ENCODE measurements at regions of chrX and their contacts with region 1.

Region 1: GRCh38 chrX:103817502-103817901 is 14.6 kb downstream of the RAB9B start:
- DNase-seq: peak; percentile 30 to 64 (median 38)
- ATAC-seq: peak; percentile 78
- H3K4me3 ChIP-seq: no peak overlapping the region
- H3K27ac ChIP-seq: no peak overlapping the region
- H3K4me1 ChIP-seq: no peaks in the 10 kb centered on the region
- H3K27me3 ChIP-seq: no peaks in the 10 kb centered on the region
- CTCF ChIP-seq: peak in 2 of 3 experiments; percentile 49 to 72; a peak in 3 of 6 replicates
- EP300 ChIP-seq: no peak
- POLR2A ChIP-seq: no peak
- RAD21 ChIP-seq: peak; percentile 60 to 66

Region 2: GRCh38 chrX:103520386-103520785 is 297.1 kb before region 1 on chrX:
- CTCF ChIA-PET with region 1: no interaction called
- POLR2A ChIA-PET with region 1: no interaction called
- in situ Hi-C with region 1: loop called (anchors 10 kb)
- intact Hi-C with region 1: no loop called
- DNase-seq: no peak
- ATAC-seq: no peak
- H3K4me3 ChIP-seq: no peak overlapping the region
- H3K27ac ChIP-seq: no peak overlapping the region
- H3K4me1 ChIP-seq: no peaks in the 10 kb centered on the region
- H3K27me3 ChIP-seq: no peaks in the 10 kb centered on the region
- CTCF ChIP-seq: no peak
- EP300 ChIP-seq: no peak
- POLR2A ChIP-seq: no peak
- RAD21 ChIP-seq: no peak

Region 3: DNA sequence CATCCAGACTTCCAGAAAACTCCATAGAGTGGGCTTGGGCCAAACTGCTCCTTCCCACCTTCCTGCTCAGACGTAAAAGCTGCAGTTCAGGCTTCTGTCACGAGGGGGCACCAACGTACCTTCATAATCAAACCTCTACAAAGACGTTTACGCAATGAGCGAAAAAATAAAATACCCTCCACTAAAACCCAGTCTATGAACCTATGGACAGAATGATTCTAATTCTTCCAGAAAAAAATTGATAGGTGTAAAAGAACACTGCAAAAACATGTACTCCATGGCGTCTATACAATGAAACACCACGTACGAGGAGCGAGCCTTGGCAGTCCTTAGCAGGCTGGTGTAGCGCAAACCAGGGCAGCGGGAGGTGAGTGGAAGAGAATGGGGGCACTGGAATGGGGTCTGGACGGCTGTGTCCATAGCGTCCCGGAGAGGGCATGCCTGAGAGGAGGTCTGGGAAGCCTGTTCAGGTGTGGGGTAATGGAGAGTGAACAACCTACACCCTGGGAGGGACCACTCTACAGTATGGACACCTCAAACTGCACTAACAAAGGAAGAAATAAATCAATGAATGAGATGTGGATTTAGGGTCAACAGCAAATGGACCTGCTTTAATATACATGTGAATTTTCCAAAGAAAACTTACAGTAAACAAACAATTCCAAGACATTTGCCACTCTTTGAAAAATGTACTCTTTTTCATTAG is 283.8 kb before region 1 on chrX:
- CTCF ChIA-PET with region 1: interaction called, 21 read pairs
- POLR2A ChIA-PET with region 1: no interaction called
- in situ Hi-C with region 1: loop called (anchors 10 kb)
- intact Hi-C with region 1: loop called (anchors 1 kb)
- DNase-seq: peak; percentile 16 to 71 (median 39)
- ATAC-seq: peak; percentile 84
- H3K4me3 ChIP-seq: no peak overlapping the region
- H3K27ac ChIP-seq: no peak overlapping the region
- H3K4me1 ChIP-seq: no peaks in the 10 kb centered on the region
- H3K27me3 ChIP-seq: no peaks in the 10 kb centered on the region
- CTCF ChIP-seq: peak; percentile 61 to 76 (median 73)
- EP300 ChIP-seq: no peak
- POLR2A ChIP-seq: no peak
- RAD21 ChIP-seq: peak; percentile 59 to 79

Region 4: DNA sequence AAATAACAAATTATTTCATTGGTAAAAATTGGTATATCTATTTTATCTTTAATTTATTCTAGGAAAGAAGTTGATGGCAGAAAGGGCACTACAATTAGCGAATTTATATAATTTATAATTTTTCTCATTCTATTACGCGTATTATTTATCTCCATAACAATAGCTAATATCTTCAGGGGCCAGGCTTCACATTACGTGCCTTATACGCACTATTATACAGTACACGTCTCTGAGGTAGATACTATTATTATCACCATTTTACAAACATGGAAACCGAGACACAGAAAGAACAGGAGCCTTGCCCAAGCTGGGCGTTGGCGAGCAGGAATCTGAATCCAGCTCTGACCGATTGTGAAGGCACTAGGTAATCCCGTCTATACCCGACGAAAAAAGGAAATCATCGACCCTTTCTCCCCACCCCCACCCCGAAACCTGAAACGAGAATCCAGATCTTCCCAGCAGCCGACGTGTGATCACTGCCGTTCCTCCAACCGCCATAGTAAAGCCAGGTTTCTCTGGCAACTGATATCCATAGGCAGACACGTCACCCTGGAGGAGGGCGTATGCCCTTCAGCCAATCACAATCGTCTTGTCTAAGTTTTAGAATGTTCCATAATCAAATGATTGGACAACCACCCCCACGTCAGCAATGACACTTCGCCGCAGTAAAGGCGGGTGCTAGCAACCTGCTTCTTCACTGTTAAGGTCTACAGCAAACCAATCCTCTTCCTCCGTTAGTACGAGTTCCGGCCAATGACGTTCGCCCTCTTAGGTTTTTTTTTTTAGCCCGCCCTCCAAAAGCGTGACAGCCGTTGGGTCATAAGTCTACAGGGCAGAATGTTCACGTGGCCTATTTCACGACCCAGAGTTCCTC is 131.1 kb before region 1 on chrX and contains the start of gene MORF4L2:
- CTCF ChIA-PET with region 1: interaction called, 4 read pairs
- POLR2A ChIA-PET with region 1: interaction called, 5 read pairs
- in situ Hi-C with region 1: no loop called
- intact Hi-C with region 1: loop called (anchors 2 kb)
- DNase-seq: peak; percentile 84 to 94 (median 88)
- ATAC-seq: peak; percentile 92
- H3K4me3 ChIP-seq: peak within 1 kb of the TSS; percentile 63
- H3K27ac ChIP-seq: peak within 1 kb of the TSS; percentile 99
- H3K4me1 ChIP-seq: peaks cover 0 to 4% of the 10 kb centered on the region in 2 experiments; a peak in 3 of 5 replicates
- H3K27me3 ChIP-seq: no peaks in the 10 kb centered on the region
- CTCF ChIP-seq: no peak
- EP300 ChIP-seq: peak; percentile 31; the same call in 1 of the 2 replicates
- POLR2A ChIP-seq: peak; percentile 94
- RAD21 ChIP-seq: no peak
- polyA plus RNA-seq, gene MORF4L2: 420 to 476 TPM

Region 5: GRCh38 chrX:103711533-103712369 is 105.8 kb before region 1 on chrX:
- CTCF ChIA-PET with region 1: interaction called, 3 read pairs
- POLR2A ChIA-PET with region 1: no interaction called
- in situ Hi-C with region 1: no loop called
- intact Hi-C with region 1: loop called (anchors 5 kb)
- DNase-seq: peak; percentile 55 to 67 (median 62)
- ATAC-seq: peak; percentile 86
- H3K4me3 ChIP-seq: no peak overlapping the region
- H3K27ac ChIP-seq: no peak overlapping the region
- H3K4me1 ChIP-seq: no peaks in the 10 kb centered on the region
- H3K27me3 ChIP-seq: peaks cover 0 to 12% of the 10 kb centered on the region in 2 experiments; a peak in 1 of 5 replicates
- CTCF ChIP-seq: peak; percentile 53 to 69 (median 54); a peak in 5 of 6 replicates
- EP300 ChIP-seq: no peak
- POLR2A ChIP-seq: no peak
- RAD21 ChIP-seq: no peak

Region 6: GRCh38 chrX:103877571-103877970 is 60.1 kb after region 1 on chrX:
- CTCF ChIA-PET with region 1: no interaction called
- POLR2A ChIA-PET with region 1: no interaction called
- in situ Hi-C with region 1: no loop called
- intact Hi-C with region 1: no loop called
- DNase-seq: no peak
- ATAC-seq: no peak
- H3K4me3 ChIP-seq: no peak overlapping the region
- H3K27ac ChIP-seq: no peak overlapping the region
- H3K4me1 ChIP-seq: no peaks in the 10 kb centered on the region
- H3K27me3 ChIP-seq: no peaks in the 10 kb centered on the region
- CTCF ChIP-seq: no peak
- EP300 ChIP-seq: no peak
- POLR2A ChIP-seq: no peak
- RAD21 ChIP-seq: no peak

Measured in K562 (cell line).